ENCODE measurements at regions of chr17 and their contacts with region 1.

Region 1: GRCh38 chr17:29760761-29761696 is 138.3 kb upstream of the CORO6 start:
- DNase-seq: peak; percentile 88 to 94
- H3K4me3 ChIP-seq: peak overlapping the region; percentile 60
- H3K4me3 Mint-ChIP-seq: peak overlapping the region; percentile 91
- H3K27ac Mint-ChIP-seq: peak overlapping the region; percentile 78
- H3K4me1 ChIP-seq: peaks cover 10% of the 10 kb centered on the region; the same call in 1 of the 2 replicates
- H3K4me1 Mint-ChIP-seq: peaks cover 9% of the 10 kb centered on the region
- H3K27me3 ChIP-seq: no peaks in the 10 kb centered on the region
- H3K27me3 Mint-ChIP-seq: no peaks in the 10 kb centered on the region
- CTCF ChIP-seq: no peak

Region 2: GRCh38 chr17:29572691-29573380 is 188.2 kb before region 1 on chr17:
- CTCF ChIA-PET with region 1: no interaction called
- POLR2A ChIA-PET with region 1: no interaction called
- intact Hi-C with region 1: no loop called
- DNase-seq: no peak
- H3K4me3 ChIP-seq: no peak overlapping the region
- H3K4me3 Mint-ChIP-seq: no peak overlapping the region
- H3K27ac Mint-ChIP-seq: no peak overlapping the region
- H3K4me1 ChIP-seq: peaks cover 10% of the 10 kb centered on the region
- H3K4me1 Mint-ChIP-seq: peaks cover 6% of the 10 kb centered on the region
- H3K27me3 ChIP-seq: no peaks in the 10 kb centered on the region
- H3K27me3 Mint-ChIP-seq: no peaks in the 10 kb centered on the region
- CTCF ChIP-seq: no peak

Region 3: GRCh38 chr17:29640413-29640812 is 120.6 kb before region 1 on chr17:
- CTCF ChIA-PET with region 1: interaction called, 11 read pairs
- POLR2A ChIA-PET with region 1: no interaction called
- intact Hi-C with region 1: loop called (anchors 1 kb)
- DNase-seq: no peak
- H3K4me3 ChIP-seq: no peak overlapping the region
- H3K4me3 Mint-ChIP-seq: no peak overlapping the region
- H3K27ac Mint-ChIP-seq: peak overlapping the region; percentile 7
- H3K4me1 ChIP-seq: peaks cover 13% of the 10 kb centered on the region
- H3K4me1 Mint-ChIP-seq: no peaks in the 10 kb centered on the region
- H3K27me3 ChIP-seq: no peaks in the 10 kb centered on the region
- H3K27me3 Mint-ChIP-seq: no peaks in the 10 kb centered on the region
- CTCF ChIP-seq: no peak

Region 4: GRCh38 chr17:29722411-29723198 is 38.4 kb before region 1 on chr17:
- CTCF ChIA-PET with region 1: no interaction called
- POLR2A ChIA-PET with region 1: no interaction called
- intact Hi-C with region 1: no loop called
- DNase-seq: peak in 1 of 2 experiments; percentile 32
- H3K4me3 ChIP-seq: no peak overlapping the region
- H3K4me3 Mint-ChIP-seq: no peak overlapping the region
- H3K27ac Mint-ChIP-seq: peak overlapping the region; percentile 37
- H3K4me1 ChIP-seq: peaks cover 50% of the 10 kb centered on the region
- H3K4me1 Mint-ChIP-seq: peaks cover 46% of the 10 kb centered on the region
- H3K27me3 ChIP-seq: no peaks in the 10 kb centered on the region
- H3K27me3 Mint-ChIP-seq: no peaks in the 10 kb centered on the region
- CTCF ChIP-seq: no peak

Measured in Caco-2 (cell line).